Natural killer cell (primary cell): ENCODE measurements at regions of chr12 and their contacts with region 1.

Region 1: GRCh38 chr12:68158432-68158831 is 1.1 kb downstream of the IFNG start:
- DNase-seq: peak in 1 of 2 donors; percentile 76
- ATAC-seq: peak; percentile 48 to 75 (median 52)
- H3K4me3 ChIP-seq: peak overlapping the region; percentile 54
- H3K4me3 Mint-ChIP-seq: peak overlapping the region; percentile 92
- H3K27ac ChIP-seq: no peak overlapping the region
- H3K27ac Mint-ChIP-seq: peak overlapping the region; percentile 83 to 92
- H3K4me1 ChIP-seq: peaks cover 13% of the 10 kb centered on the region
- H3K4me1 Mint-ChIP-seq: peaks cover 63 to 71% of the 10 kb centered on the region in 2 donors
- H3K27me3 ChIP-seq: no peaks in the 10 kb centered on the region
- H3K27me3 Mint-ChIP-seq: no peaks in the 10 kb centered on the region
- CTCF ChIP-seq: peak; percentile 72

Region 2: GRCh38 chr12:67873355-67873754 is 285.1 kb before region 1 on chr12:
- intact Hi-C with region 1: no loop called
- DNase-seq: no peak
- ATAC-seq: no peak
- H3K4me3 ChIP-seq: no peak overlapping the region
- H3K4me3 Mint-ChIP-seq: no peak overlapping the region
- H3K27ac ChIP-seq: no peak overlapping the region
- H3K27ac Mint-ChIP-seq: no peak overlapping the region
- H3K4me1 ChIP-seq: peaks cover 7% of the 10 kb centered on the region
- H3K4me1 Mint-ChIP-seq: no peaks in the 10 kb centered on the region
- H3K27me3 ChIP-seq: no peaks in the 10 kb centered on the region
- H3K27me3 Mint-ChIP-seq: peaks cover 2 to 13% of the 10 kb centered on the region in 2 donors
- CTCF ChIP-seq: no peak

Region 3: DNA sequence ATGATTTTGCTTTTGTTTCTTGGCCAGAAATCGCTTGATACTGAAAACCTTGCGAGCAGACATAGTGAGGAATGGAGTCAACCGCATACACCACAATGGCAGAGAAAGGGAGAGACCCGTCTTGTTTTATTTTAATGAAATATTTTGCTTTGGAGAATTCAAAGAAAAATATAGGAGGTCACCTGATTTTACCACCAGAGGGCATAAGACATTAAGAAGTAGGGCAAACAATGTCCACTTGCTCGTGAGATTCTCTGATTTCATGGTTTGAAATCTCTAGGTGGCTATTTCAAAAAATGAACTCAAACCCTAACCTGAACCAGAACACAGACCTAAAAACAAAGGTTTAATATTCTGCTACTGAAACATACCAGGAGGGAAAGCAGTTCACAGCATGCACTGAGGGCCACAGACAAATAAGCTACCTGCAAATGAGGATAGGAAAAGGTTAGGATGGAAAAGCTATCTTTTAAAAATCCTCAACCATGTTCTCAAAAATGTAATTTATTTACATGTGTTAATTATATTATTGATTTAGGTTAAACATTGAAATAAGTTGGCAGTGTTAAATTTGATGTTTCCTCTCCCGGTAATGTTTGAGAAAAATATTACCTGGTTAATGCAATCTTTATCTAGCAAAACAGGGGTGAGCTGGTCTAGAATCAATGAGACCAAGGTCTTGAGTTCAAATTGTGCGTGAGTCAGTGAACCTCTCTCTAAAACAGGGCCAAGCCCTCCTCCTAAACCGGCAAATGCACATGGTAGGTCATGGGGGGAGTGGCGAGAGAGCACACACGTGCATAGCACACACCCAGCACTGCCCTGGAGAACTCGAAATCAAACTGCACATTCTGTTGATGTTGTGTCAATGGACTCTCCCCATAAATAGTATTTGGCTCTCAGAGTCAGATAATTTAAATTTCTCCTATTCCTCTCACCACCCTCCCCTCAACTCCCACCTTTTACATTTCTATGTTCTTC is 156.7 kb before region 1 on chr12:
- intact Hi-C with region 1: loop called (anchors 1 kb)
- DNase-seq: peak in 1 of 2 donors; percentile 36
- ATAC-seq: no peak
- H3K4me3 ChIP-seq: no peak overlapping the region
- H3K4me3 Mint-ChIP-seq: no peak overlapping the region
- H3K27ac ChIP-seq: no peak overlapping the region
- H3K27ac Mint-ChIP-seq: no peak overlapping the region
- H3K4me1 ChIP-seq: no peaks in the 10 kb centered on the region
- H3K4me1 Mint-ChIP-seq: no peaks in the 10 kb centered on the region
- H3K27me3 ChIP-seq: no peaks in the 10 kb centered on the region
- H3K27me3 Mint-ChIP-seq: peaks cover under 1 to 3% of the 10 kb centered on the region in 2 donors
- CTCF ChIP-seq: no peak

Region 4: DNA sequence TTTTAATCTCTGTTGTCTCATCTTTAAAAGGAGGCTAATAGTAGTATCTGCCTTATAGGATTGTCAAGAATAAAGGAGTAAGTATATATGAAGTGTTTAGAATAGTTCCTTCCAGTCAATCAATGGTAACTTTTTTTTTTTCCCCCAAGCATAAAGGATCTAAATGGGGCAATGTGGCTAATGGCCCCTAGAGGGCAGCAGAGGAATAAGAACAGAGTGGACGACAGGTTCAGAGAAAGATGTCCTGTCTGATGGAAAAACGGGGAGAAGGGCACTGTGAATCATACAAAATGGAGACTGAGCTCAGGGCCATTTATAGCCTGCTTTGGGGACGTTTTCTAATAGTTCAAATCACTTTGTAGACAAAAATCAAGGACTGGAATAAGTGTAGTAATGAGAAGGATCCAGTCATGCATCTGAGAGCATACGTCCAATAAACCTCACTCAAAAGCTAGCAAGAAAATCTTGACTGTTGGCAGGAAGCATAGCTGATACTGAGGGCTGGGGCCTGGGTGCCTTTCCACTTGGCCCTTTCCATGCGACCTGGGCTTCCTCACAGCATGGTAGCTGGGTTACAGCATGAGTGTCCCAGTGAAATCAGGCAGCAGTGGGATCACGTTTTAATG is 117.9 kb before region 1 on chr12:
- intact Hi-C with region 1: loop called (anchors 1 kb)
- DNase-seq: peak; percentile 57 to 87
- ATAC-seq: peak; percentile 77 to 80 (median 78)
- H3K4me3 ChIP-seq: no peak overlapping the region
- H3K4me3 Mint-ChIP-seq: no peak overlapping the region
- H3K27ac ChIP-seq: no peak overlapping the region
- H3K27ac Mint-ChIP-seq: peak overlapping the region in 1 of 2 donors; percentile 40
- H3K4me1 ChIP-seq: peaks cover 24% of the 10 kb centered on the region
- H3K4me1 Mint-ChIP-seq: peaks cover 31 to 41% of the 10 kb centered on the region in 2 donors
- H3K27me3 ChIP-seq: no peaks in the 10 kb centered on the region
- H3K27me3 Mint-ChIP-seq: peaks cover 8 to 10% of the 10 kb centered on the region in 2 donors
- CTCF ChIP-seq: peak; percentile 94

Region 5: GRCh38 chr12:68080577-68080976 is 77.9 kb before region 1 on chr12:
- intact Hi-C with region 1: loop called (anchors 1 kb)
- DNase-seq: peak; percentile 50 to 65
- ATAC-seq: peak; percentile 88 to 98 (median 96)
- H3K4me3 ChIP-seq: no peak overlapping the region
- H3K4me3 Mint-ChIP-seq: peak overlapping the region; percentile 70
- H3K27ac ChIP-seq: peak overlapping the region; percentile 17
- H3K27ac Mint-ChIP-seq: peak overlapping the region; percentile 65 to 81
- H3K4me1 ChIP-seq: peaks cover 7% of the 10 kb centered on the region
- H3K4me1 Mint-ChIP-seq: peaks cover 44 to 52% of the 10 kb centered on the region in 2 donors
- H3K27me3 ChIP-seq: no peaks in the 10 kb centered on the region
- H3K27me3 Mint-ChIP-seq: no peaks in the 10 kb centered on the region
- CTCF ChIP-seq: no peak

Region 6: DNA sequence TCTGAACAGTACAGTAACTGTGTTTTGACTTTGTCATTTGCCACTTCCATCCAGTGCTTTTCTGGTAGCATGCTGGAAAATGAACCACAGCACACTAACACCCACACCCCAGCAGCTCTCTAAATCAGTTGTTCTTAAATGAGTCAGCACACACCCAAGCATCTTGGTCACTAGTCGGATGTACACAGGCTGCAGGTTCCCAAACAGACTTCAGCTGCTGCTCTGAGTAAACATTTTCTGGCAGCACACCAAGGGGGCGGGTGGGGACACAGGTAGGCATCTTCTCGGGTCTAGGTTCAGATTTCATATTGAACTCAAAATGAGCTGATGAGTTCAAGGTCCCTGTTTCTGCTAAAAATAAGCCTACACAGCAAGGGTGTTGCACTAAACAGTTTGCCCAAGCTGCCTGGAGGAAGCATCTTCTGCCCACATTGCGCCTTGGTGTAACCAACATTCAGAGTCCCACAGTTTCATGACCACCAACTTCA is 38.7 kb before region 1 on chr12:
- intact Hi-C with region 1: loop called (anchors 1 kb)
- DNase-seq: peak; percentile 50 to 63
- ATAC-seq: peak; percentile 80 to 85 (median 85)
- H3K4me3 ChIP-seq: no peak overlapping the region
- H3K4me3 Mint-ChIP-seq: no peak overlapping the region
- H3K27ac ChIP-seq: peak overlapping the region; percentile 62
- H3K27ac Mint-ChIP-seq: no peak overlapping the region
- H3K4me1 ChIP-seq: peaks cover 41% of the 10 kb centered on the region
- H3K4me1 Mint-ChIP-seq: peaks cover 0 to 14% of the 10 kb centered on the region in 2 donors
- H3K27me3 ChIP-seq: no peaks in the 10 kb centered on the region
- H3K27me3 Mint-ChIP-seq: no peaks in the 10 kb centered on the region
- CTCF ChIP-seq: no peak

Region 7: DNA sequence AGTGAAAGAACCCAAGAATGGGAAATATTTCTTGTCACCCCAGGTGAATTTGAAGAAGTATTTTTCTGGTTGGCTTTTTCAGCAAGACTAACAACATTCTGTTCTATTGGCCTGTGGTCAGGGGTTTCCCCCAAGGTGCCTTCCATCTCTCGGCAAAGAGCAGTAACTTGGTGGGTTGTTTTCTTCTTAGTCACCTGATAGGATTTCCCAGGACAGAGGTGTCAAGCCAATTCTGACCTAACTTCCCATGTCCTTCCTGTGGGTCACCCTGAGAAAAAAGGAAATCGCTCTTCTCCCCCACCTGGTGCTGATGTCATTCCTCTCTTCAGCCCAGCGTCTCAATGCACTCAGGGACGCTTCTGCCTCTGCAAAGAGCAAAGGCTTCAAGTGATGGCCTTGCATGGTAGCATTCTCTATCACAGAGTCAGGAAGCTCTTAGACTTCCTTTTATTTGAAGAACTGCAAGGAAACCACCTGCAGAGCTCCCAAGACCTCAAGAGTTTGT is 17.2 kb after region 1 on chr12:
- intact Hi-C with region 1: loop called (anchors 1 kb)
- DNase-seq: peak; percentile 40 to 92
- ATAC-seq: peak; percentile 87 to 94 (median 88)
- H3K4me3 ChIP-seq: peak overlapping the region; percentile 8
- H3K4me3 Mint-ChIP-seq: peak overlapping the region; percentile 75
- H3K27ac ChIP-seq: peak overlapping the region; percentile 51
- H3K27ac Mint-ChIP-seq: peak overlapping the region; percentile 83 to 91
- H3K4me1 ChIP-seq: peaks cover 18% of the 10 kb centered on the region
- H3K4me1 Mint-ChIP-seq: peaks cover 24 to 32% of the 10 kb centered on the region in 2 donors
- H3K27me3 ChIP-seq: no peaks in the 10 kb centered on the region
- H3K27me3 Mint-ChIP-seq: no peaks in the 10 kb centered on the region
- CTCF ChIP-seq: no peak

Region 8: GRCh38 chr12:68189821-68190242 is 31.4 kb after region 1 on chr12:
- intact Hi-C with region 1: loop called (anchors 2 kb)
- DNase-seq: peak in 1 of 2 donors; percentile 67
- ATAC-seq: peak; percentile 73 to 87 (median 82)
- H3K4me3 ChIP-seq: no peak overlapping the region
- H3K4me3 Mint-ChIP-seq: peak overlapping the region; percentile 17
- H3K27ac ChIP-seq: peak overlapping the region; percentile 32
- H3K27ac Mint-ChIP-seq: peak overlapping the region; percentile 55 to 77
- H3K4me1 ChIP-seq: no peaks in the 10 kb centered on the region
- H3K4me1 Mint-ChIP-seq: peaks cover 8 to 21% of the 10 kb centered on the region in 2 donors
- H3K27me3 ChIP-seq: no peaks in the 10 kb centered on the region
- H3K27me3 Mint-ChIP-seq: peaks cover 0 to 11% of the 10 kb centered on the region in 2 donors
- CTCF ChIP-seq: no peak